Activated CD4-positive, alpha-beta T cell treated with anti-CD3 and anti-CD28 coated beads, Interleukin-2, amount 10 ng/mL, durations not matched to agents 24 days and 14 days (primary cell): ENCODE measurements at regions of chr10 and their contacts with region 1.

Region 1: DNA sequence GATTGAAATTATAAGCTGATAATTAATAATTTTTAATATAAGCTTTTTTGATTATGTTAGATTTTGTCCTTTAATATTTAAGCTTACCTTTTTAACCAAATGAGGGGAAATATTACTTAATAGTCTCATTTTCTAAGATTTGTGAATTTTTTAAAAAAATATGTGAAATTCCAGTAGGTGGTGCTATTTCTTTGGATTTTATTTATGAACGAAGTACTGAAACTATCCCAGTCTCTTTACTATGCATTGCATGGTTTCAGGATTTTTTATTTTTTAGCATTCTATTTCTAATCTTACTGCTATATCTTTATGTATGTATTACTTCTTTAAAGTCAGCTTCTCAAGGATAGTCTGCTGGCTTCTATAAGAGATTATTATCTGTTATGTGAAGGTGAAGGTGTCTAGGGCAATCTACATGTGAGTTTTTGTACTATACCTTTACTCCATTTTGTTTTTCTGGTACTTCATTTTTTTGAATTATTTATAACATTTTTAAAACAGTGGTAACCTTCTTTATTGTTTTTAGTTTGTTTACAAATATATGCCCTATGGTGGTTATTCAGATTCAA is 78.3 kb downstream of the ATRNL1 start:
- DNase-seq: no peak
- H3K4me3 Mint-ChIP-seq: no peak overlapping the region
- H3K27ac Mint-ChIP-seq: no peak overlapping the region
- H3K4me1 Mint-ChIP-seq: no peaks in the 10 kb centered on the region
- H3K27me3 Mint-ChIP-seq: peaks cover under 1% of the 10 kb centered on the region

Region 2: DNA sequence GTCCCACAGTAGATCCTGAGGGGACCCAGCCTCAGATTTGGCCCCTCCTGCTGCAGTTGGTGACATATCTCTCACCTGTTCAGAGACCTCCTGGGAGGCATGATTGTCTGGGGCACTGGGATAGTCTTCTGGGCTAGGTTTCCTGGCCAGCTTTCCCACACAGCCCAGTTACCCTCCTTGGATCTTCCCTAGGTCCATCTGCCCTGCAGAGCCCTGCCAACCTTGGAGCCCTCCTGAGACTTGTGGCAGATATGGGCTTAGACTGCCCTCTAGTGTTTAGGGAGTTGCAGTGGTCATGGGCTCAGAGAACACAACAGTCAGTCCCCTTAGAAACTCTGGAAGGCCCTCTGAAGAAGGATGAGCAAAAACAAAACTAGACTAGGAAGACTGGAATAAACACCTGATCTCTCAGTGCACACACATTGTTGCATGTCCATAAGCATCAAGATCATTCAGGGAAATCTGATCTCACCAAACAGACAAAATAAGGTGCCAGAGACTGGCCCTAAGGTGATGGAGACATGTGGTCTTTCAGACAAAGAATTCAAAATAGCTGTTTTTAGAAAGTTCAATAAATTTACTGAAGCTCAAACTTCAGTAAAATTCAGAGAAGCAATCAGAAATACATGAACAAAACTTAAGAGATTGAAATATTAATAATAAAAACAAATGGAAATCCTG is 246.2 kb after region 1 on chr10:
- intact Hi-C with region 1: loop called (anchors 10 kb)
- DNase-seq: peak; percentile 65
- H3K4me3 Mint-ChIP-seq: no peak overlapping the region
- H3K27ac Mint-ChIP-seq: no peak overlapping the region
- H3K4me1 Mint-ChIP-seq: no peaks in the 10 kb centered on the region
- H3K27me3 Mint-ChIP-seq: no peaks in the 10 kb centered on the region

Region 3: GRCh38 chr10:115483294-115483693 is 311.8 kb after region 1 on chr10:
- intact Hi-C with region 1: no loop called
- DNase-seq: no peak
- H3K4me3 Mint-ChIP-seq: no peak overlapping the region
- H3K27ac Mint-ChIP-seq: no peak overlapping the region
- H3K4me1 Mint-ChIP-seq: no peaks in the 10 kb centered on the region
- H3K27me3 Mint-ChIP-seq: no peaks in the 10 kb centered on the region

Region 4: GRCh38 chr10:116385994-116386809 is 1214.7 kb after region 1 on chr10:
- intact Hi-C with region 1: loop called (anchors 5 kb)
- DNase-seq: no peak
- H3K4me3 Mint-ChIP-seq: no peak overlapping the region
- H3K27ac Mint-ChIP-seq: no peak overlapping the region
- H3K4me1 Mint-ChIP-seq: no peaks in the 10 kb centered on the region
- H3K27me3 Mint-ChIP-seq: no peaks in the 10 kb centered on the region